ENCODE measurements at regions of chr3 and their contacts with region 1.

Region 1: DNA sequence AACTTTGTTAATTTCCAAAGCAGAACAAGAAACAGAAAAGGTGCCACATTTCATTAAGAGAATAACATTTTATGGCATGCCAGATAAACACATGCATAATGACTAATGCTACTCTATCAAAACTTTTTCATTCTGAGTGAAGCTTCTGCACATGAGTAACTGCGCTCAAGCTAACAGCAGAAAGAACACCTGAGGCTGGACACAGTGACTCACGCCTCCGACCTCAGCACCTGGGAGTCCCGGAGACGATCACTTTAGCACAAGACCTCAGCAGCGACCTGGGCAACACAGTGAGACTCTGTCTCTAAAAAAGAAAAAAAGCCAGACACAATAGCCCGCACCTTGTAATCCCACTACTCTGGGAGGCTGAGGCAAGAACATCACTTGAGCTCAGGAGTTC is 70.6 kb downstream of the ACAP2 start:
- DNase-seq: no peak
- H3K4me3 ChIP-seq: no peak overlapping the region
- H3K27ac ChIP-seq: no peak overlapping the region
- H3K4me1 ChIP-seq: no peaks in the 10 kb centered on the region
- H3K27me3 ChIP-seq: no peaks in the 10 kb centered on the region
- CTCF ChIP-seq: no peak
- EP300 ChIP-seq: no peak
- POLR2A ChIP-seq: no peak

Region 2: DNA sequence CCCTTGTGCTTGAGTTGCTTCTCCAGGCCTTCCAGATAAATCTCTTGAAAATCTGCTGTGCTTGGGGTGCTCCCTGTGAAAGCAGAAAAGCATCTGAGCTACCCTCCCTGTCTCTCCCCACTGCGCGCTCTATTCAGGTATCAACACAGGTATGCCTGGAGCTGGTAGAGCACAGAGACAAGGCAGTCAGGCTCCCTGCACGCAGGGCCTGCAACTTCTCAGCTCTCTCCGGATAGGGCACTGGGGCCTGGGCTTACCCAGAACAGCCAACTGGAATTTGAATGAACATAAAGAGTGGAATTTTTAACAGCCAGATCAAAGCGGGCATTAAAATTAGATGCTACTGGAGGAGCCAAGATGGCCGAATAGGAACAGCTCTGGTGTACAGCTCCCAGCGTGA is 284.9 kb before region 1 on chr3:
- in situ Hi-C with region 1: no loop called
- intact Hi-C with region 1: no loop called
- DNase-seq: no peak
- H3K4me3 ChIP-seq: peak overlapping the region in 1 of 4 donors; percentile 46
- H3K27ac ChIP-seq: no peak overlapping the region
- H3K4me1 ChIP-seq: no peaks in the 10 kb centered on the region
- H3K27me3 ChIP-seq: no peaks in the 10 kb centered on the region
- CTCF ChIP-seq: no peak
- EP300 ChIP-seq: no peak
- POLR2A ChIP-seq: no peak

Region 3: DNA sequence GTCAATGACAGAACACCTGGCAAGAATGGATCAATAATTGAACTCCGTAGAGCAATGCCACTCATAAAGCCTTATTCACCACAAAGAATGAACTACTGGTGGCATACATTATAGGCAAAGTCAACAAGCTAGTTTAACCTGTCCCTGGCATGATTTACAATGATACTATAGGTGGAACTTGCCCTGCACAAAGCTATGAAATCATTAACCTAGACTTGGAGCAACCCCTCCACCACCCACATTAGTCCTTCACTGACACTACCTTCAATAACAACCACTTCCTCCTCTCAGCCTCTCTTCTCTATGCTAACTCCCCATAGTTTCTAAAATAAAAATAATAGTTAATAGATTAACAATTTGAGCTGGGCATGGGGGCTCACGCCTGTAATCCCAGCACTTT is 16.2 kb after region 1 on chr3:
- in situ Hi-C with region 1: no loop called
- intact Hi-C with region 1: loop called (anchors 1 kb)
- DNase-seq: peak; percentile 26
- H3K4me3 ChIP-seq: no peak overlapping the region
- H3K27ac ChIP-seq: peak overlapping the region; percentile 75 to 79 (median 77)
- H3K4me1 ChIP-seq: peaks cover 0 to 27% (median 12%) of the 10 kb centered on the region in 4 donors
- H3K27me3 ChIP-seq: no peaks in the 10 kb centered on the region
- CTCF ChIP-seq: peak in 1 of 5 experiments; percentile 32
- EP300 ChIP-seq: no peak
- POLR2A ChIP-seq: no peak